A549 (cell line): ENCODE measurements at regions of chr17 and their contacts with region 1.

Region 1: DNA sequence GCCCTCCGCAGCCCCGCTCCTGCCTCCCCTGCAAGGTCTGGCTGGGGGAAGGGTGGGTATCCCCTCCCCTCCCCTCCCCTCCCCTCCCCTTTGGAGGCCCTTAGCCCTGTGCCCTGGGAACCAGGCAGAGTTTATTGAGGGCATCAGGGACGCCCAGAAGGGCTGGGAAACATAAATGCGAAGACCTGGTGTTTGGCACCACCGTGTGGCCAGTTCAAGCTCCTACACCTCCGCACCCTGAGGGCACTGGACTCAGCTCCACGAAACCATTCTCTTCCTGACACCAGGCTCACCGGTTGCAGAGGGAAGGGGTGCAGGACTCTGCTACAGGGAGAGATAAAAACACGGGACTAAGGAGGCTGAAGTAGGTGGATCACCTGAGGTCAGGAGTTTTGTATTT is 1.0 kb upstream of the AIPL1 start:
- DNase-seq: peak; percentile 79 to 90
- ATAC-seq: peak; percentile 93 to 98
- H3K4me3 ChIP-seq: no peak overlapping the region
- H3K27ac ChIP-seq: no peak overlapping the region
- H3K4me1 ChIP-seq: no peaks in the 10 kb centered on the region
- CTCF ChIP-seq: peak; percentile 84
- EP300 ChIP-seq: no peak
- POLR2A ChIP-seq: no peak
- RAD21 ChIP-seq: peak; percentile 87 to 88

Region 2: GRCh38 chr17:6045621-6046357 is 390.2 kb before region 1 on chr17:
- CTCF ChIA-PET with region 1: no interaction called
- POLR2A ChIA-PET with region 1: no interaction called
- DNase-seq: no peak
- ATAC-seq: no peak
- H3K4me3 ChIP-seq: no peak overlapping the region
- H3K27ac ChIP-seq: no peak overlapping the region
- H3K4me1 ChIP-seq: no peaks in the 10 kb centered on the region
- CTCF ChIP-seq: no peak
- EP300 ChIP-seq: no peak
- POLR2A ChIP-seq: no peak
- RAD21 ChIP-seq: peak in 1 of 2 experiments; percentile 38; a peak in 2 of 5 replicates

Region 3: GRCh38 chr17:6392609-6393350 is 43.2 kb before region 1 on chr17:
- CTCF ChIA-PET with region 1: interaction called, 10 read pairs
- POLR2A ChIA-PET with region 1: no interaction called
- DNase-seq: no peak
- ATAC-seq: peak; percentile 11 to 31; a peak in 3 of 6 replicates
- H3K4me3 ChIP-seq: no peak overlapping the region
- H3K27ac ChIP-seq: no peak overlapping the region
- H3K4me1 ChIP-seq: 0 out of 3 replicates have a peak, but pooled peaks cover 3% of the 10 kb centered on the region
- CTCF ChIP-seq: no peak
- EP300 ChIP-seq: no peak
- POLR2A ChIP-seq: no peak
- RAD21 ChIP-seq: no peak

Region 4: DNA sequence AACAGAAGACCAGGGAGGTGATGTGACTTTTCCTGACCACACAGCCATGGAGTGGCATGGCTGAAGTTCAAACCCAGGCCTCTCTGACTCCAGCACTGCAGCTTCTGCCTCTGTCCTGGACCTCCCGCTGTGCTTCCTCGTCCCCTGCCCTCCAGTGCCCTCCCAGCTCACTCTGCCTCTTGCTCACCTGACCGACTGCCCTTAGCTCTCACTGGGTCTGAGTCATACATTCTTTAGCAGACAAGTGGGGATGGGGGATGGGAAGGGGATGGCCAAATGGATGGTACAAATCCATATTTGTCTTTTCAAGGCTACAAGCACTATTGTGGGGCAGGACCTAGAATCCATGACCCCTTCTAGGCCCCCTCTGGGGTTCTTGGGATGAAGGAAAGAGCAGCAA is 87.4 kb after region 1 on chr17:
- CTCF ChIA-PET with region 1: no interaction called
- POLR2A ChIA-PET with region 1: no interaction called
- DNase-seq: peak; percentile 68 to 74
- ATAC-seq: peak; percentile 75 to 78
- H3K4me3 ChIP-seq: 0 out of 3 replicates have a peak overlapping the region, but pooled peaks have one; percentile 10
- H3K27ac ChIP-seq: peak overlapping the region; percentile 69 to 89
- H3K4me1 ChIP-seq: peaks cover 27% of the 10 kb centered on the region
- CTCF ChIP-seq: no peak
- EP300 ChIP-seq: no peak; a peak in 1 of 5 replicates
- POLR2A ChIP-seq: no peak
- RAD21 ChIP-seq: peak in 1 of 2 experiments; percentile 18; a peak in 1 of 5 replicates

Region 5: GRCh38 chr17:6548578-6549330 is 112.8 kb after region 1 on chr17:
- CTCF ChIA-PET with region 1: no interaction called
- POLR2A ChIA-PET with region 1: no interaction called
- DNase-seq: no peak
- ATAC-seq: 0 out of 6 replicates have a peak, but pooled peaks of 1 of the 2 experiments have one; percentile 9
- H3K4me3 ChIP-seq: no peak overlapping the region
- H3K27ac ChIP-seq: no peak overlapping the region; a peak in 1 of 6 replicates
- H3K4me1 ChIP-seq: peaks cover 10% of the 10 kb centered on the region; the same call in 2 of the 3 replicates
- CTCF ChIP-seq: no peak
- EP300 ChIP-seq: no peak
- POLR2A ChIP-seq: no peak
- RAD21 ChIP-seq: no peak